AG04449 (cell line): ENCODE measurements at regions of chr19 and their contacts with region 1.

Region 1: DNA sequence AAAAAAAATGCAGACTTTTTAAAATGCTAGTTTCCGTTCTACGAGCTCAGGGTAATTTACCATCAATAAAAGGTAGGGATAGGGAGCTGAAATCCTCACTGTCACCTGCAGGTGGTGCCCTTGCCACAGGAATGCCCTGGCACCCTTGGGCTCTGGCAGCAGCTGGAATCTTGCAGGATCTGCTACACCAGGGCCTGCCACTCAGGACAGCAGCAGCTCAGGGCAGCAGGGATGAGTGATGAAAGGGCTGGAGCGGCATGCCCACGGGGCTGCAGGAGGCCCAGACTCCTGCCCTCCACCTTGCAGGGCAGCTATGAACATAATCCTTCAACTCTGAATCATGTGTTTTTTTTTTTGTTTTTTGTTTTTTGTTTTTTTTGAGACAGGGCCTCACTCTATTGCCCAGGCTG is 54.0 kb downstream of the GNG7 start:
- DNase-seq: peak; percentile 10
- H3K4me3 ChIP-seq: no peak overlapping the region
- CTCF ChIP-seq: peak; percentile 77

Region 2: GRCh38 chr19:2309734-2310362 is 338.7 kb before region 1 on chr19:
- CTCF ChIA-PET with region 1: no interaction called
- POLR2A ChIA-PET with region 1: no interaction called
- DNase-seq: no peak
- H3K4me3 ChIP-seq: no peak overlapping the region
- CTCF ChIP-seq: no peak

Region 3: DNA sequence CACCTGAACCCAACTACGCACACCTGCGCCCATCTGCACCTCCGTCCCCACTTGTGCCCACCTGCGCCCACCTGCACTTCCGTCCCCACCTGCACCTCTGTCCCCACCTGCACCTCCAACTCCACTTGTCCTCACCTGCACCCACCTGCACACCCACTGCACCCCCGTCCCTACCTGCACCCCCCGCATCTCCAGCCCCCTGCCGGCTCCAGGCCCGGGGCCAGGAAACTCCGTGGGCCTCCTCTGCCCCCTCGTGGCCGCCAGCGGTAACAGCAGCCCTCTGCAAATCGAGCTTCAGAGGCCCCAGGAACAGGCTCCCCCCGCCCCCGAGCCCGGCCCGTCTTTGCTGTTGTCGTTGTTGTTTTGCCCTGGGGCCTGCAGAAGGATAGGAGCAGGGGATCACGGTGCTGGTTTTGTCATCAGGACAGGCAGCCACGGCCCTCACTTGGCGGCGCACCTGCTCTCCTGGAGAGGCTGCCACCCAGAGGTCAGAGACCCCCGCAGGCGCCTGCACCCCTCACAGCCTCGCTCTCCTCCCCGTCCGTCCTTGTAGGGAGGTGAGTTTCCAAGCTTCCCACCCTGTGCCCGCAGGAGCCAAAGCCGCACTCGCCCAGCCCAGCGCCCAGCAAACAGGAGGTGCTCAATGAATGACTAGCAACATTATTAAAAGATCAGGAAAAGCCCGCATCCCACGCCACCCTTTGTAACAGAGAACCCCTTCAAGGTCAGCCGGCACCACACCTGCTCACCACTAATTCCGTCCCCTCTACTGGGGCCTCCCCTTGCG is 11.4 kb before region 1 on chr19:
- CTCF ChIA-PET with region 1: interaction called, 11 read pairs
- POLR2A ChIA-PET with region 1: no interaction called
- DNase-seq: no peak
- H3K4me3 ChIP-seq: no peak overlapping the region
- CTCF ChIP-seq: peak; percentile 87

Region 4: GRCh38 chr19:2750808-2751443 is 102.4 kb after region 1 on chr19:
- CTCF ChIA-PET with region 1: interaction called, 287 read pairs
- POLR2A ChIA-PET with region 1: no interaction called
- DNase-seq: no peak
- H3K4me3 ChIP-seq: no peak overlapping the region
- CTCF ChIP-seq: no peak

Region 5: DNA sequence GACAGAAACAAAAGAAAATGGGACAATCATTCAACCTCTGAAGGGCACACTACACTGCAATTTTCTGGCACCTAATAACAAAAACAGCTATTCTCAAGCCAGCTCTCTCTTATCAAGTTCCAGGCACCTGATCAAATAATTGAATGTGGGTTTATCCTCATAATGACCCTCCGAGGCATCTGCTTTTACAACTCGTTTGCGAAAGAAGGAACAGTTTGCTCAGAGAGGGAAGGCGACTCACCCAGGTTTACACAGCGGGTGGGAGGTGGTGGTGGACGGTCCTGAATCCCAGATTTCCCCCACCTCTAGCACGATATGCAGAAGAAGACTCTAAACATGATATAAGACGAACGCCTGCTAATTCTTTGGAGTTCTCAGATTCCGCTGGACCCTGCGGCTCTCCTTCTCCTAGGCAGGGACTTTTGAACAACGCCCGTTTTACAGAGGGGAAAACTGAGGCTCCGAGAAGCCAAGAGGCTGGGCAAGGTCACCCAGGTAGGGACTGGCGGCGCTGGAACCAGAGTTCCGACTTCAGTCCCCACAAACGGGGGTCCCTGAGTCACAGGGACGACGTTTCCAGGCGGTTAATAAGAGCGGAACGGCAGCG is 133.9 kb after region 1 on chr19:
- CTCF ChIA-PET with region 1: interaction called, 14 read pairs
- POLR2A ChIA-PET with region 1: no interaction called
- DNase-seq: no peak
- H3K4me3 ChIP-seq: peak overlapping the region; percentile 99
- CTCF ChIP-seq: no peak

Region 6: DNA sequence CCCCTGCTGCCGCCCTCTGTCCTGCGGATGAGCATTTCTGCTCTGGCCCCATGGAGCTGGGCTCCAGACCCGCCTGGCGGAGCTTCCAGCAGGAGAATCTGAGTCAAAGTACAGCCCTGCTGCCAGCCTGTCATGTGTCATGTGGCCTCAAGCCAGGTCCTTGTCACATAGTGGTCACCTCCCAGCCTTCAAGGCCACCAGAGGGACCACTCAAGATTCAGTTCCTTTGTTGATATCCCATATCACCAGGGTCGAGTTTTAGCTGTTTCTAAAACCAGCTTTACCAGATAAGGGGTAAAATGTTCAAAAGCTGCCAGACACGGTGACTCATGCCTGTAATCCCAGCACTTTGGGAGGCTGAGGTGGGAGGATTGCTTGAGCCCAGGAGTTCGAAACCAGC is 150.2 kb after region 1 on chr19:
- CTCF ChIA-PET with region 1: no interaction called
- POLR2A ChIA-PET with region 1: no interaction called
- DNase-seq: no peak
- H3K4me3 ChIP-seq: no peak overlapping the region
- CTCF ChIP-seq: no peak

Region 7: GRCh38 chr19:2887391-2887914 is 238.9 kb after region 1 on chr19:
- CTCF ChIA-PET with region 1: interaction called, 12 read pairs
- POLR2A ChIA-PET with region 1: no interaction called
- DNase-seq: no peak
- H3K4me3 ChIP-seq: no peak overlapping the region
- CTCF ChIP-seq: peak; percentile 33

Region 8: DNA sequence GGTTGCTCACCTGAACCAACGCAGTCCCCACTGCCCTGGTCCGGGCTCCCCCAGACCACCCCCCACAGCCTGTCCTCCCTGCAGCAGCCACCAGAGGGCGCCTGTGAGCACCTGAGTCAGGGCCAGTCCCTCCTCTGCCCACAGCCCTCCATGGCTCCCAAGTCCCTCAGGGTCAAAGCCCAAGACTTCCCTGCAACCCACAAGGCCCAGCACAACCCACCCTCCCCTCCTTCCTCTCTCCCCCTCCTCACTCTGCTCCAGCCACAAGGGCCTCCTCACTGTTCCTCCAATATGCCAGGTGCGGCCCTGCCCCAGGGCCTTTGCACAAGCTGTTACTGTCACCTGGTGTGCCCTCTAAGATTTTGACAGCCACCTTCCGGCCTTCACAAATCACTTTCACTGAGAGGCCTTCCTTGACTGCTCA is 498.2 kb after region 1 on chr19:
- CTCF ChIA-PET with region 1: no interaction called
- POLR2A ChIA-PET with region 1: no interaction called
- DNase-seq: no peak
- H3K4me3 ChIP-seq: no peak overlapping the region
- CTCF ChIP-seq: peak; percentile 90